Dorsolateral prefrontal cortex (tissue), 120 donors: ENCODE measurements at regions of chr2 and their contacts with region 1.

Region 1: DNA sequence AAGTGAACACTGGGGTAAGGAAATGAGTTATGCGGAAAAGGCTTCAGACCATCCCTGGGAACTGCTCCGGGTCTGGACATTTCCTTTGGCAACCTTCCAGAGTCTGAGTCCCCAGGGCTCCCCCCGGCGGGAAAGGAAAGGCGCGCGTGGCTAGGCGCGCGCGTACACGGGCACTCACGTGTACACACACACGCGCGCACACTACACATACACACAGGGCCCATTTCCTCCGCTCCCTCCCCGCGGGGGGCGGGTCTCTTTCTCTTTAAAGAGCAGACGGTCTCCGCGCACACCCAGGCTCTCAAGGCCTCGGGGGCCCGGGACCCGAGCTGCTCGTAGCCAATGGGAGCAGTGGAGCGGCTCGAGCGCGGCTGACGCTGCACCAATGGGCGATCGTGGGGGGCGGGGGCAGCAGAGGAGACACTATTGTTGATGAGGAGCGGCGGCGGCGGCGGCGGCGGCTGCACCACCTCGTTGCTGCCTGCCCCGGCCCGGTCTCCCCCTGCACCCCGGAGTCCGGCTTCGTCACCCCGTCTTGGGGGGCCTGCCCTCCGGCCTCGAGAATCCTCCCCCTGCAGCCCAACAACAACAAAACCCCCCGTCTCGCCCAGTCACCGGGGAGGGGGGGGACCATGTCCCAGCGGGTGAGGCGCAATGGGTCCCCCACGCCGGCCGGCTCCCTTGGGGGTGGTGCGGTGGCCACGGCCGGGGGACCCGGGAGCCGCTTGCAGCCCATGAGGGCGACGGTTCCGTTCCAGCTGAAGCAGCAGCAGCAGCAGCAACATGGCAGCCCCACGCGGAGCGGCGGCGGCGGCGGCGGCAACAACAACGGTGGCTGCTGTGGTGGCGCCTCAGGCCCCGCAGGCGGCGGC is at the start of gene FAM117B:
- DNase-seq: peak; percentile 96 to 99 (median 98)
- H3K4me3 ChIP-seq: peak within 1 kb of the TSS; percentile 59 to 96 (median 87)
- H3K27ac ChIP-seq: peak within 1 kb of the TSS; percentile 59 to 98 (median 91)
- H3K27me3 ChIP-seq: no peaks in the 10 kb centered on the region
- CTCF ChIP-seq: peak in 20 of 56 donors; percentile 6 to 35 (median 14)
- total RNA-seq, gene FAM117B: 11.0 to 28.9 (median 19.0) TPM

Region 2: GRCh38 chr2:202265467-202266277 is 369.1 kb before region 1 on chr2 and contains the start of gene NOP58:
- intact Hi-C with region 1: loop called in 1 of 2 experiments (anchors 5 kb)
- DNase-seq: peak; percentile 76 to 94 (median 93)
- H3K4me3 ChIP-seq: peak within 1 kb of the TSS; percentile 67 to 100 (median 93)
- H3K27ac ChIP-seq: peak within 1 kb of the TSS; percentile 86 to 100 (median 98)
- H3K27me3 ChIP-seq: no peaks in the 10 kb centered on the region
- CTCF ChIP-seq: peak in 23 of 56 donors; percentile 4 to 47 (median 20)
- total RNA-seq, gene NOP58: 25.6 to 69.7 (median 45.3) TPM

Region 3: DNA sequence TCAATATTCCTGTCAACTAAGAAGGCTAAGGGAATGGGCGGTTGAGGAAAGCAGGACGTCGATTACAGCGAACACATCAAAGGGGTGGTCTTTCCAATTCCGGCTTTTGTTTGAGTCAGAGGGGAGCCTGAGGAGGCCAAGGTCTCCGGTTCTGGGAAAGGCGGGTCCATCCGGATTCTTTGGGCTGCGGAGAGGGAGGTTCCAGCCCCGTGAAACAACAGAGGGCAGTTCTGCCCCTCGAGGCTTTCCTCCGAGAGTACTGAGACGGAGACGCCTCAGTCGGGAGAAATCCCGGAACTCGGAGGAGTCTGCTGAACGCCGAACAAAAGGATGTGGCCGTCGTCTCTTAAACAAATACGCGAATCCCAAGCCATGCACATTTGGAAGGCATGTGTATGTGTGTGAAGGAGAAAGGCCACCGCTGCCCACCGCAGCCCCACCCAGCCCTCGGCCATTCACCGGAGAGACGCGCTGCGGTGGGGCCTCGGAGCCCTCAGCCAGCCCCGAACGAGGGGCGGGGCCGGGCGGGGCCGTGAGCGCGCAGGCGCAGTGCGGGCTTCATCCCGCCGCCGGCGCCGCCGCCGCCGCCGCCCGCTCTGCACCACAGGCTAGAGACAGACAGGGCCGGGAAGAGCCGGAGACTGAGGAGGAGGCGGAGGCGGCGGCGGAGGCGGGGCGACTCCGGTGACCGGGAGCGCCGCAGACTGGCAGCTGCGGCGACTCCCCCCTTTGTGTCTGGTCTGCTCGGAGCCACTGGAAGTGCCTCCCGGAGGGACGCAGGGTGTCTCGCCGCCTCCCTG is 259.0 kb before region 1 on chr2 and contains the start of gene BMPR2:
- intact Hi-C with region 1: loop called (anchors 5 to 10 kb)
- DNase-seq: peak; percentile 70 to 93 (median 83)
- H3K4me3 ChIP-seq: peak within 1 kb of the TSS; percentile 67 to 98 (median 89)
- H3K27ac ChIP-seq: peak within 1 kb of the TSS; percentile 36 to 98 (median 94)
- H3K27me3 ChIP-seq: no peaks in the 10 kb centered on the region
- CTCF ChIP-seq: peak in 12 of 56 donors; percentile 4 to 35 (median 16)
- total RNA-seq, gene BMPR2: 42.7 to 140 (median 102) TPM

Region 4: GRCh38 chr2:202870431-202871299 is 235.9 kb after region 1 on chr2:
- intact Hi-C with region 1: loop called in 1 of 2 experiments (anchors 2 kb)
- DNase-seq: peak; percentile 29 to 91 (median 62)
- H3K4me3 ChIP-seq: peak overlapping the region; percentile 67 to 93 (median 82)
- H3K27ac ChIP-seq: peak overlapping the region; percentile 16 to 95 (median 82)
- H3K27me3 ChIP-seq: no peaks in the 10 kb centered on the region
- CTCF ChIP-seq: peak in 29 of 56 donors; percentile 2 to 42 (median 23)

Region 5: GRCh38 chr2:203014456-203015199 is 379.8 kb after region 1 on chr2 and contains the start of gene NBEAL1:
- intact Hi-C with region 1: loop called in 1 of 2 experiments (anchors 10 kb)
- DNase-seq: peak; percentile 97 to 99 (median 98)
- H3K4me3 ChIP-seq: peak within 1 kb of the TSS; percentile 39 to 99 (median 84)
- H3K27ac ChIP-seq: peak within 1 kb of the TSS; percentile 59 to 97 (median 92)
- H3K27me3 ChIP-seq: no peaks in the 10 kb centered on the region
- CTCF ChIP-seq: peak in 25 of 56 donors; percentile 4 to 57 (median 23)
- total RNA-seq, gene NBEAL1: 14.1 to 45.8 (median 27.0) TPM

Region 6: GRCh38 chr2:203327901-203328759 is 693.3 kb after region 1 on chr2 and contains the start of gene ABI2:
- intact Hi-C with region 1: loop called in 1 of 2 experiments (anchors 5 kb)
- DNase-seq: peak; percentile 70 to 93 (median 84)
- H3K4me3 ChIP-seq: peak within 1 kb of the TSS; percentile 60 to 99 (median 93)
- H3K27ac ChIP-seq: peak within 1 kb of the TSS; percentile 54 to 98 (median 94)
- H3K27me3 ChIP-seq: no peaks in the 10 kb centered on the region
- CTCF ChIP-seq: peak in 13 of 56 donors; percentile 5 to 36 (median 14)
- total RNA-seq, gene ABI2: 128 to 305 (median 224) TPM